Dendritic cell treated with granulocyte-macrophage colony-stimulating factor and Interleukin-4, amounts not matched to agents 40 ng/mL and 50 ng/mL, for 4 days (primary cell): ENCODE measurements at regions of chr1 and their contacts with region 1.

Region 1: GRCh38 chr1:235725434-235725833 is 75.8 kb upstream of the GNG4 start:
- H3K4me3 Mint-ChIP-seq: no peak overlapping the region
- H3K27ac Mint-ChIP-seq: peak overlapping the region; percentile 36
- H3K4me1 Mint-ChIP-seq: no peaks in the 10 kb centered on the region
- H3K27me3 Mint-ChIP-seq: no peaks in the 10 kb centered on the region

Region 2: DNA sequence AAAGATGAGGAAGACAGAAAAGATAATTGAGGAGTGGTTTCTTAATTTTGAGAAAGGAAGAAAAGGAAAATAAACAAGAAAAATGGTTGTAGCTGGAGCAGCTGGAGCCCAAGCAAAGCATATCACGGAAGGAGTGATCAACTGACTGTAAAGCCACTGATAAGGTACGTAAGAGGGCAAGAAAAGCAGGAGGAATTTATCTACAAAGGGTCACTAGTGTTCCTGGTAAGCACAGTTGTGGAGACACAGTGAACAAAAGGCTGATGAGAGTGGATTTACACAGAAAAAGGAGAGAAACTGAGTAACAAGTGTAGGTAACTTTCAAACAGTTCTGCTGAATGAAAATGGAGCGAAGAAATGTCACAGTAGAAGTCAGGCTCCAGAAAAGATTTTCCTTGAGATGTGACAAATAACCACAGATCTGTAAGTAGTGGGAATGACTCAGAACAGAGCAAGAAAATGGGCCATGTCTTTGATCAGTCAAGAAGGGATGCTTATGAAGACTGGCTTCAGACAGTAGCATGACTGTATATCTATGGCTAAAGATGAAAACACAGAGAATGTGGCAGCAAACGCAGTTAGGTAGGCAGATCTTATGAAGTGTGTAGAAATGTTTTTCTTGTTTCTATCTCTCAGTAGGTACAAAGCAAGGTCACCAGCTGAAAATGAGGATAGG is 518.8 kb before region 1 on chr1:
- intact Hi-C with region 1: loop called (anchors 10 kb)
- H3K4me3 Mint-ChIP-seq: no peak overlapping the region
- H3K27ac Mint-ChIP-seq: no peak overlapping the region
- H3K4me1 Mint-ChIP-seq: peaks cover 6% of the 10 kb centered on the region
- H3K27me3 Mint-ChIP-seq: no peaks in the 10 kb centered on the region

Region 3: GRCh38 chr1:235657747-235658526 is 67.5 kb before region 1 on chr1:
- intact Hi-C with region 1: no loop called
- H3K4me3 Mint-ChIP-seq: no peak overlapping the region
- H3K27ac Mint-ChIP-seq: no peak overlapping the region
- H3K4me1 Mint-ChIP-seq: no peaks in the 10 kb centered on the region
- H3K27me3 Mint-ChIP-seq: peaks cover 27% of the 10 kb centered on the region

Region 4: DNA sequence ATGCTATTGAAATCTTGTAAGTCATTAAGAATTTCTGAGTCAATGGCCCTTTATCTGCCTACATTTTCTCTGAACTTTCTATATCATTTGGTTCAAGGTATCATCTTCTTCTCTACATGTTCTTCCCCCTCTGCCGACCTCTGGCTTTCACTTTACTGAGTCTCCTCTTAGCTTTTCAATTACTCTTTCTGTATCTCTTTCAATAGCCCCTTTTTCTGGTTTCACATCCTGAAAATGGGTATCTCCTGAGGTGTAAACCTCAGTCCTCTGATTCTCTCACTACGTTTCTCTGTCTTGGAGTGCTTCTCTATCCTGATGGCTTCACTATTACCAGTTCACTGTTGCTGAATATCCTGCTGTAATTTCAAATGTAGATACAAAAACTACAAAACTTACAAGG is 42.4 kb after region 1 on chr1:
- intact Hi-C with region 1: no loop called
- H3K4me3 Mint-ChIP-seq: no peak overlapping the region
- H3K27ac Mint-ChIP-seq: peak overlapping the region; percentile 56
- H3K4me1 Mint-ChIP-seq: peaks cover 9% of the 10 kb centered on the region
- H3K27me3 Mint-ChIP-seq: no peaks in the 10 kb centered on the region